Activated CD4-positive, alpha-beta memory T cell treated with anti-CD3 and anti-CD28 coated beads for 36 hours (primary cell): ENCODE measurements at regions of chr3 and their contacts with region 1.

Region 1: DNA sequence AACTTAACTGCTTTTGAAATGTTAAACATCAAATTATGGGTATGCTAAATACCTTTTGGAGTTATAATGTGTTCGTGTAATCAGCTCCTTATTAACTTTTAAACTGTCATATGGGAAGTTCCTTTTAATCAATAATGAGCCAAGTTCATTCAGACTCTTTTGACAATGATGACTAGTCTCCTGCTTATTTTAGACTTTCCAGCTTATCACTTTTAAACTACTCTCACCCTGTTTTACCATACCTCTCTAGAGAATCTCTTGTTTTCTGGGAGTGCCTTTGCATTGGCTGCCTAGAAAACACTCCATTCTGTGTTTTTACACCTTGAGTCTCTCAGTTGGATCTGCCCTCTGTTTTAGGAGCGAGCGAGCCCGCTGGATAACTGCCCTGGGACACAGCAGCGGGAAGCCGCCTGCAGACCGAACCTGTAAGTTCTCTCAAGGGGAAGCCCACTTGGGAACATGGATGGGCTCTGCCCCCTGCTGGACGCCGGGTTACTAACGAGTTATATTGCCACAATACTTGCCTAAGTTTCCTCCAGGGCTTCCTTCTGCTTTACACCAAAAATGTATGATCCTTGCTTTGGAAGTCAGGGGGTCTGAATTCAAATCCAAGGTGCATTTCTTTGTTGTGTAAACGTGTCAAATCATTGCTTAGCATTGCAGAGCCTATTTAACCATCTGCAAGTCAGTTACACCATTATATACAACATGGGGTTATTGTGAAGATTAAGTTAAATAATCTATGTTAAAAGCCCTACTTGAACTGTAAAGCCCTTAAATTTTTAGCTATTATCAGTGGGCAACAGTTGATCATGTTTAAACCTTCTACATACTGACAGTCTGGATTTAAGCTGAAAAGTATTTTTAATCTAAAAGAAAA is 71.3 kb downstream of the DHX36 start:
- DNase-seq: peak; percentile 85
- H3K4me3 Mint-ChIP-seq: no peak overlapping the region
- H3K27ac Mint-ChIP-seq: no peak overlapping the region
- H3K4me1 Mint-ChIP-seq: peaks cover 3% of the 10 kb centered on the region
- H3K27me3 Mint-ChIP-seq: no peaks in the 10 kb centered on the region

Region 2: GRCh38 chr3:154040286-154040685 is 212.7 kb before region 1 on chr3:
- CTCF ChIA-PET with region 1: interaction called, 4 read pairs
- POLR2A ChIA-PET with region 1: no interaction called
- intact Hi-C with region 1: loop called (anchors 1 kb)
- DNase-seq: no peak
- H3K4me3 Mint-ChIP-seq: no peak overlapping the region
- H3K27ac Mint-ChIP-seq: no peak overlapping the region
- H3K4me1 Mint-ChIP-seq: no peaks in the 10 kb centered on the region
- H3K27me3 Mint-ChIP-seq: peaks cover 1% of the 10 kb centered on the region

Region 3: DNA sequence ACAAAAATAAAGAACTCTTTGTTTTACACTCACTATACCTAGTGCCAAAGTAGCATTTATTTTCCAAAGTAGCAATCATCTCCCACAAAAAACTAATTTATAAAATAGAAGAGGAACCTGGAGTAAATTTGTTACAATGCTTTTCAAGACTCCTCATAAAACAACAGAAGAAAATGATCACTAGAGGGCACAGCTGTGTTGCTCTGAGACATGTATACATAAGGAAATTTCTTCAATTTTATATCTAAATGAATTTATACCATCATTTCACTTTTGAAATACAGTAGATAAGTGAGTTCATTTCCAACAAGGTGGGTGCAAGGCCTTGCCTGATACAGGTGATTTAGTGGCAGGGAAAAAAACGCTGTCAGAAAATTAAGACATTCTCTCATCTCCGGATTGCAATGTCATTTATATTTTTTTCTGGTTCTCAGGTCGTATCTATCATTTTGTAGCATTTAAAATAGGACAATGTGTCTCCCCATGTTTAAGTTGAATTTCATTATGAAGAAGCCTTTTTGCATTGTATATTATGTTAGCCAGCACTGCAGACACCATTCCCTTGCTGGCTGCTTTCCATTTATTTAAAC is 157.1 kb before region 1 on chr3:
- CTCF ChIA-PET with region 1: interaction called, 17 read pairs
- POLR2A ChIA-PET with region 1: no interaction called
- intact Hi-C with region 1: loop called (anchors 1 kb)
- DNase-seq: no peak
- H3K4me3 Mint-ChIP-seq: no peak overlapping the region
- H3K27ac Mint-ChIP-seq: no peak overlapping the region
- H3K4me1 Mint-ChIP-seq: no peaks in the 10 kb centered on the region
- H3K27me3 Mint-ChIP-seq: peaks cover 5% of the 10 kb centered on the region

Region 4: DNA sequence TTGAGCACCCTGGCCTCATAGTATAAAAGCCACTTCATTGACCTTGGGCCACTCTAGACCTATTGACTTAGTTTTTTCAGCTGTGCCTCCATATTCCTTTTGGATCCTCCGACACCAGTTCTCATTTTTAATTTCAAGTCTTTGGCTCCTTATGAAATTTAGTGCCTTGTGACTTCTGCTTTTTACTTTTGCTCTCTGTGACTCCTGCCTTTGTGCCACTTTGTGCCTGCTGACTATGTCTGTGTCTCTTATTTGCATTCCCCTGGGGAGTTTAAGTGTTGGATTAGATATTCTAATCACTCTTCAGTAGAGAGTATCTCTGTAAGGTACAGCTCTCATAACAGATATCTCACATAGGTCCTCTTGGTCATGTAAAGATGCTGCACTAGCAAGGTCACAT is 216.6 kb after region 1 on chr3:
- CTCF ChIA-PET with region 1: no interaction called
- POLR2A ChIA-PET with region 1: no interaction called
- intact Hi-C with region 1: no loop called
- DNase-seq: no peak
- H3K4me3 Mint-ChIP-seq: no peak overlapping the region
- H3K27ac Mint-ChIP-seq: no peak overlapping the region
- H3K4me1 Mint-ChIP-seq: no peaks in the 10 kb centered on the region
- H3K27me3 Mint-ChIP-seq: no peaks in the 10 kb centered on the region